ENCODE measurements at regions of chr4 and their contacts with region 1.

Region 1: GRCh38 chr4:78864405-78865024 is 74.7 kb downstream of the PAQR3 start:
- DNase-seq: peak; percentile 42 to 67 (median 60)
- H3K4me3 ChIP-seq: no peak overlapping the region
- H3K4me3 Mint-ChIP-seq: no peak overlapping the region
- H3K27ac ChIP-seq: no peak overlapping the region
- H3K27ac Mint-ChIP-seq: peak overlapping the region in 1 of 7 donors; percentile 13
- H3K4me1 ChIP-seq: no peaks in the 10 kb centered on the region
- H3K4me1 Mint-ChIP-seq: peaks cover 0 to 4% (median 2%) of the 10 kb centered on the region in 4 donors
- H3K27me3 ChIP-seq: no peaks in the 10 kb centered on the region
- H3K27me3 Mint-ChIP-seq: no peaks in the 10 kb centered on the region

Region 2: GRCh38 chr4:77959566-77960338 is 904.8 kb before region 1 on chr4:
- CTCF ChIA-PET with region 1: interaction called, 10 read pairs
- POLR2A ChIA-PET with region 1: no interaction called
- intact Hi-C with region 1: loop called (anchors 1 kb)
- DNase-seq: peak in 4 of 5 donors; percentile 7 to 32 (median 16)
- H3K4me3 ChIP-seq: no peak overlapping the region
- H3K4me3 Mint-ChIP-seq: no peak overlapping the region
- H3K27ac ChIP-seq: no peak overlapping the region
- H3K27ac Mint-ChIP-seq: no peak overlapping the region
- H3K4me1 ChIP-seq: no peaks in the 10 kb centered on the region
- H3K4me1 Mint-ChIP-seq: peaks cover 0 to 5% (median 0%) of the 10 kb centered on the region in 4 donors
- H3K27me3 ChIP-seq: no peaks in the 10 kb centered on the region
- H3K27me3 Mint-ChIP-seq: no peaks in the 10 kb centered on the region

Region 3: DNA sequence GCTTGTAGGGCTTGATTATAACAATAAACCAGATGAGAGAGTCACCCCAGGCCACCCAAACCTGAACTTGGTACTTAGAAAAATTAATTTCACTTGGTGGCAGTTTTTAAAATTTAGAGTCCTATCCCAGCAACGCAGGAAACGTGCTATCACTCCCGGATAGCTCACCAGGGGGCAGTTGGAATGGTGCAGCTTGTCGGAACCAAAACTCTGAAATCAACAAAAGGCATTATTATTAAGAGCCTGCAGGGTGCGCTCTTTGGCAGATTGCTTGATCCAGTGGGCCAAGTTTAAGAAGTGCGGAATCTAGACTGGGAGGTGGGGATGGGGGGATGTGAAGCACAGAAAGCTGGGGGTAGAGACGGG is 805.0 kb before region 1 on chr4:
- CTCF ChIA-PET with region 1: interaction called, 6 read pairs
- POLR2A ChIA-PET with region 1: no interaction called
- intact Hi-C with region 1: loop called (anchors 1 kb)
- DNase-seq: no peak
- H3K4me3 ChIP-seq: no peak overlapping the region
- H3K4me3 Mint-ChIP-seq: peak overlapping the region; percentile 59 to 90 (median 74)
- H3K27ac ChIP-seq: no peak overlapping the region
- H3K27ac Mint-ChIP-seq: peak overlapping the region in 2 of 7 donors; percentile 26 to 50
- H3K4me1 ChIP-seq: peaks cover 33% of the 10 kb centered on the region
- H3K4me1 Mint-ChIP-seq: peaks cover 12 to 35% (median 24%) of the 10 kb centered on the region in 4 donors
- H3K27me3 ChIP-seq: peaks cover 46% of the 10 kb centered on the region
- H3K27me3 Mint-ChIP-seq: peaks cover 49 to 67% of the 10 kb centered on the region in 2 donors

Region 4: GRCh38 chr4:78592104-78592783 is 272.3 kb before region 1 on chr4:
- CTCF ChIA-PET with region 1: interaction called, 8 read pairs
- POLR2A ChIA-PET with region 1: no interaction called
- intact Hi-C with region 1: loop called (anchors 5 kb)
- DNase-seq: no peak
- H3K4me3 ChIP-seq: no peak overlapping the region
- H3K4me3 Mint-ChIP-seq: no peak overlapping the region
- H3K27ac ChIP-seq: no peak overlapping the region
- H3K27ac Mint-ChIP-seq: no peak overlapping the region
- H3K4me1 ChIP-seq: no peaks in the 10 kb centered on the region
- H3K4me1 Mint-ChIP-seq: peaks cover 0 to 1% (median 0%) of the 10 kb centered on the region in 4 donors
- H3K27me3 ChIP-seq: no peaks in the 10 kb centered on the region
- H3K27me3 Mint-ChIP-seq: peaks cover 3 to 7% of the 10 kb centered on the region in 2 donors

Region 5: GRCh38 chr4:78612398-78613178 is 251.9 kb before region 1 on chr4:
- CTCF ChIA-PET with region 1: interaction called, 10 read pairs
- POLR2A ChIA-PET with region 1: no interaction called
- intact Hi-C with region 1: loop called (anchors 1 kb)
- DNase-seq: peak in 1 of 5 donors; percentile 8
- H3K4me3 ChIP-seq: no peak overlapping the region
- H3K4me3 Mint-ChIP-seq: no peak overlapping the region
- H3K27ac ChIP-seq: no peak overlapping the region
- H3K27ac Mint-ChIP-seq: no peak overlapping the region
- H3K4me1 ChIP-seq: peaks cover 28% of the 10 kb centered on the region
- H3K4me1 Mint-ChIP-seq: peaks cover 8 to 25% (median 13%) of the 10 kb centered on the region in 4 donors
- H3K27me3 ChIP-seq: no peaks in the 10 kb centered on the region
- H3K27me3 Mint-ChIP-seq: no peaks in the 10 kb centered on the region

Region 6: GRCh38 chr4:78644744-78645330 is 219.7 kb before region 1 on chr4:
- CTCF ChIA-PET with region 1: interaction called, 6 read pairs
- POLR2A ChIA-PET with region 1: no interaction called
- intact Hi-C with region 1: loop called (anchors 1 kb)
- DNase-seq: peak in 4 of 5 donors; percentile 24 to 45 (median 31)
- H3K4me3 ChIP-seq: no peak overlapping the region
- H3K4me3 Mint-ChIP-seq: no peak overlapping the region
- H3K27ac ChIP-seq: no peak overlapping the region
- H3K27ac Mint-ChIP-seq: no peak overlapping the region
- H3K4me1 ChIP-seq: no peaks in the 10 kb centered on the region
- H3K4me1 Mint-ChIP-seq: peaks cover 0 to 5% (median 2%) of the 10 kb centered on the region in 4 donors
- H3K27me3 ChIP-seq: no peaks in the 10 kb centered on the region
- H3K27me3 Mint-ChIP-seq: no peaks in the 10 kb centered on the region

Region 7: GRCh38 chr4:78720994-78721677 is 143.4 kb before region 1 on chr4:
- CTCF ChIA-PET with region 1: no interaction called
- POLR2A ChIA-PET with region 1: no interaction called
- intact Hi-C with region 1: no loop called
- DNase-seq: peak in 4 of 5 donors; percentile 5 to 17 (median 10)
- H3K4me3 ChIP-seq: no peak overlapping the region
- H3K4me3 Mint-ChIP-seq: peak overlapping the region in 7 of 8 donors; percentile 67 to 85 (median 71)
- H3K27ac ChIP-seq: no peak overlapping the region
- H3K27ac Mint-ChIP-seq: peak overlapping the region in 6 of 7 donors; percentile 1 to 86 (median 42)
- H3K4me1 ChIP-seq: peaks cover 14% of the 10 kb centered on the region
- H3K4me1 Mint-ChIP-seq: peaks cover 11 to 31% (median 17%) of the 10 kb centered on the region in 4 donors
- H3K27me3 ChIP-seq: no peaks in the 10 kb centered on the region
- H3K27me3 Mint-ChIP-seq: no peaks in the 10 kb centered on the region

Region 8: GRCh38 chr4:78775303-78776030 is 89.0 kb before region 1 on chr4:
- CTCF ChIA-PET with region 1: no interaction called
- POLR2A ChIA-PET with region 1: no interaction called
- intact Hi-C with region 1: loop called (anchors 5 kb)
- DNase-seq: peak; percentile 83 to 90 (median 89)
- H3K4me3 ChIP-seq: peak overlapping the region; percentile 79 to 91
- H3K4me3 Mint-ChIP-seq: peak overlapping the region; percentile 93 to 96 (median 95)
- H3K27ac ChIP-seq: peak overlapping the region; percentile 77
- H3K27ac Mint-ChIP-seq: peak overlapping the region; percentile 92 to 98 (median 96)
- H3K4me1 ChIP-seq: peaks cover 13% of the 10 kb centered on the region
- H3K4me1 Mint-ChIP-seq: peaks cover 12 to 22% (median 15%) of the 10 kb centered on the region in 4 donors
- H3K27me3 ChIP-seq: no peaks in the 10 kb centered on the region
- H3K27me3 Mint-ChIP-seq: no peaks in the 10 kb centered on the region

Region 9: DNA sequence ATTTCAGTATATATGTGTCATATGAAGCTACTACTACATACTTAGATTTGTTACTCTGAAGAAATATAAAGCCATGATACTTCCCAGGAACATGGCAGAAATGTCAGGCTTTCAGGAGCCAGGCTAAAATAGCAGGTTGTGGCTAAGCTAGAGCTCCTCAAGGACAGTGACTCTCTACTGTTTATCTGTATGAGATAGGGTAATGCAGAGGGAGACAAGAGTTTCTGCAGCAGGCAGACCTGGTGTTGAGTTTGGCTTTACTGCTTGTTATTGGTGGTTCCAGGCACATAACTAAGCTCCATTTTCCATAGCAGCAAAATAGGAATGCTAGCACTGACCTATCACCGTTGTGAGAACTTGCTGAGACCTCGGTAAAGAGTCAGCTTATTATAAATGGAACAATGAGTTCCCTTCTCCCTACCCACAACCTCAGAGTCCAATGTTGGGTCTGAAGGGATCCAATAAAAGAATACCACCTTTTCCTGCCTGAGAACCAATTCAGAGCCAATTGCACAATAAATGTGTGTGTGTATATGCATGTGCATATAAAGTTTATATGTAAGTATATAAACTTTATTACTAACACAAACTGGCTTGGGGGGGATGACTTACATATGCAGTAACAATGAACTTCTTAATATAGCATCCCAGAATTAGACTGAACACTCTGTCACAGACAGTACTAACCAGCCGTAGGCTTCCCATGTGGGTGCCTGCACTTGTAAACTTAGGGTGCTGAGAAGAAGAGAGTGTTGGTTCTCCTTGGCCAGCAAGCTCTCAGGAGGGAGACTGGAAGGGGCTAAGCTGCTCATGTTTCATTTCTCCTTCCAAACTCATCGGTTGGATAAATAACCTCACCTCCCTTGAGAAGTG is 126.7 kb after region 1 on chr4:
- CTCF ChIA-PET with region 1: no interaction called
- POLR2A ChIA-PET with region 1: no interaction called
- intact Hi-C with region 1: no loop called
- DNase-seq: no peak
- H3K4me3 ChIP-seq: no peak overlapping the region
- H3K4me3 Mint-ChIP-seq: no peak overlapping the region
- H3K27ac ChIP-seq: no peak overlapping the region
- H3K27ac Mint-ChIP-seq: no peak overlapping the region
- H3K4me1 ChIP-seq: no peaks in the 10 kb centered on the region
- H3K4me1 Mint-ChIP-seq: no peaks in the 10 kb centered on the region
- H3K27me3 ChIP-seq: no peaks in the 10 kb centered on the region
- H3K27me3 Mint-ChIP-seq: peaks cover 4 to 8% of the 10 kb centered on the region in 2 donors

Measured in CD4-positive, alpha-beta memory T cell (primary cell).